IMR-90 (cell line): ENCODE measurements at regions of chr12 and their contacts with region 1.

Region 1: DNA sequence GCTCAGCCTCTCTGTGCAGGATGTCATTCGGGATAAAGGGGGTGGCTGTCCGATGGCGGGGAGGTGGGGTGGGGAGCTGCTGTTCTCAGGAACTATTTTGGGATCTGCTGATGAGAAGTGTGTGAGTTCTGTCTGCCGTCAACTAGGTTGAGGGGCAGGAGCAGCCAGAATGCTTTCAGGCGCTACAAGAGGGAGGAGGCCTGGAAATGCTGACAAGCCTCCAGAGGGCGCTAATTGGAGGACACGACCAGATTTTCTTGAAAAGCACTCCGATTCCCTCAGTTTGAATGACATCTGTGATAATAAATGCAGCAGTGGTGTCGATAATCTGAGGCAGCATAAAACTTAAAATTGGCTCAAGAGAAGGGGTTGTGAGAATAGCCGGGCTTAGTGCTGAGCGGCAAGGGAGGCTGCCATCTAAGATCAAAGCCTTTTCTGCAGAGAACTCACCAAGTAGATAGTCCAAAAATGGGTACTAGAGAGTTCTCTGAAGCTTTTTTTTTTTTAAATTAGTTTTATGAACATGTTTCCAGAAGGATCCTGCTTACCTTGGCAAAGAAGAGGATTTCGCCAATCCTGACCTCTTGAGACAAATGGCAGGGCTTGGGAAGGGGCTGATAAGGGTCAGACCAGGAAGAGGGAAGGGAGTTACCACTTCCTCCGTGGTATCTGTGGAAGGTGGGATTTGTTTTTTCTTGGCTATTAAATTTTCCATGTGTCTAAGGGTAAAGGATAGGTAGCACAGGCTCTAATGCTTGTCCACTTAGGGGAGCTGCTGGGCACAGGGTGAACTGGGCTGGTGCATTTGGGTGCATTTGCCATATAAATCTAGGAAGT is 94.4 kb downstream of the CRACR2A start:
- DNase-seq: peak; percentile 29
- ATAC-seq: peak; percentile 35; the same call in 1 of the 2 replicates
- H3K4me3 ChIP-seq: no peak overlapping the region
- H3K27ac ChIP-seq: no peak overlapping the region
- H3K4me1 ChIP-seq: no peaks in the 10 kb centered on the region
- H3K27me3 ChIP-seq: peaks cover 28% of the 10 kb centered on the region
- CTCF ChIP-seq: peak; percentile 53
- POLR2A ChIP-seq: no peak
- RAD21 ChIP-seq: peak; percentile 53

Region 2: DNA sequence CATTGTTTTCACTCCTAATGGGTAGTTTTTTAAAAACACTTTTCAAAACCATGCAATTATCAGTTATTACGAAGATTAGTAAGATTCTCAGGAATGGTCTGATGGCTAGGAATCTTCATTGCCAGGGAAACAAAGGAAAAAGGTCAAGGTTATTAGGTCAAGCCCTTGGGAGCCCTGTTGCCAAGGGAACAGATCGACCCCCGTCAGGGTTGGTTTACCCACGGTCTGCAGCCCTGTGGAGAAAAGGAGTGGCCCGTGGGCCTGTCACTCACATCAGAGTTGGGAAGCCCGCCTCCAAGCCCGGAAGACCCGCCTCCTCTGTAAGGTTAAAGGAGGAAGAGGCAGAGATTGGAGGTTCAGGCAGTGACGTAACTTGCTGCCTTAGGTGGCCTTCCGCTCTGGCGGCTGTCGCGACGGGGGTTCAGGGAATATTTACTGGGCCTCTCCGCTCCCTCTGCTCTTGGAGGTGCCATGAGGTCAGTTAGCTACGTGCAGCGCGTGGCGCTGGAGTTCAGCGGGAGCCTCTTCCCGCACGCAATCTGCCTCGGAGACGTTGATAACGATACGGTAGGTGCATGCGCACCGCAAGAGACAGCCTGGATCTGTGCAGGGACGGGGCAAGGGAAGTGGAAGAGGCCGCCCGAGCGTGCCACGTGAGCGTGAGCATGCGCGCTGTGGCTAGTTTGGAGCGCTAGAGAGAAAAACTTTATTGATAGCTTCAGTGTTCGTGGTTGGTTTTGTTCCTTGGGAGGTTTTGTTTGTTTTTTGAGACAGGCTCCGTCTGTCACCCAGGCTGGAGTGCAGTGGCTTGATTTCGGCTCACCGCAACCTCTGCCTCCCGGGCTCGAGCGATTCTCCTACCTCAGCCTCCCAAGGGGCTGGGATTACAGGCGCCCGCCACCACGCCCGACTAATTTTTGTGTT is 846.0 kb before region 1 on chr12 and contains the start of gene ITFG2:
- CTCF ChIA-PET with region 1: no interaction called
- POLR2A ChIA-PET with region 1: no interaction called
- dilution Hi-C with region 1: no loop called
- in situ Hi-C with region 1: no loop called
- intact Hi-C with region 1: no loop called
- DNase-seq: peak; percentile 98
- ATAC-seq: peak; percentile 98
- H3K4me3 ChIP-seq: peak within 1 kb of the TSS; percentile 61
- H3K27ac ChIP-seq: peak within 1 kb of the TSS; percentile 92
- H3K4me1 ChIP-seq: no peaks in the 10 kb centered on the region
- H3K27me3 ChIP-seq: no peaks in the 10 kb centered on the region
- CTCF ChIP-seq: no peak
- POLR2A ChIP-seq: peak; percentile 84
- RAD21 ChIP-seq: no peak
- total RNA-seq, gene ITFG2: 20.0 and 20.3 TPM in 2 replicates

Region 3: DNA sequence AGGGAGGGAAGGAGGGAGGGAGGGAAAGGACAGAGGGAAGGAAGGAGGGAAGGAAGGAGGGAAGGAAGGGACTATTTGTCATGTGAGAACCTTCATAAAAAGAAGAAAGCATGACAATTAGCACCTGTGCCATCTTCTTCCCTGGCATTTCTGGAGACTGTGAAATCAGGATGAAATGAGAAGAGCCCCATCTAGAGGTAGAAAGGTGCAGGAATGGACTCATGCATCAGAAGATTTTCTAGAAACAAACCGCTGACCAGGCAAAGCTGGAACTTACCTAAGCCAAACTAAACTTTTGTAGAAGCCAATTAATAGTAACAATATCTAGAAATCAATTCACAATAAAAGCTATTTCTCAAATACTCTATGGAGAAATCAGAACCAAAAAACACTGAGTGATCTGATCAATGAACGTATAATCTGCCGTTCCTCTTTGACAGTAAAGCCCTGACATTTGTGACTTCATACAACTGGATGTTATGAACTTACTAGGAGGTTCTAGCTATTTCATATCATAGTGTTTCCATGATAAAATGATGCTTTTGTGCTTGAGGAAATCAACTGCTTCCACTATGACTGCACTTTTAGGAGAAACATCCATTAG is 118.8 kb after region 1 on chr12:
- CTCF ChIA-PET with region 1: interaction called, 3 read pairs
- POLR2A ChIA-PET with region 1: no interaction called
- dilution Hi-C with region 1: no loop called
- in situ Hi-C with region 1: loop called (anchors 10 kb)
- intact Hi-C with region 1: loop called (anchors 1 kb)
- DNase-seq: peak; percentile 43
- ATAC-seq: peak; percentile 80
- H3K4me3 ChIP-seq: no peak overlapping the region
- H3K27ac ChIP-seq: no peak overlapping the region
- H3K4me1 ChIP-seq: no peaks in the 10 kb centered on the region
- H3K27me3 ChIP-seq: peaks cover 9% of the 10 kb centered on the region
- CTCF ChIP-seq: peak; percentile 74
- POLR2A ChIP-seq: 0 out of 2 replicates have a peak, but pooled peaks have one; percentile 31
- RAD21 ChIP-seq: peak; percentile 79

Region 4: DNA sequence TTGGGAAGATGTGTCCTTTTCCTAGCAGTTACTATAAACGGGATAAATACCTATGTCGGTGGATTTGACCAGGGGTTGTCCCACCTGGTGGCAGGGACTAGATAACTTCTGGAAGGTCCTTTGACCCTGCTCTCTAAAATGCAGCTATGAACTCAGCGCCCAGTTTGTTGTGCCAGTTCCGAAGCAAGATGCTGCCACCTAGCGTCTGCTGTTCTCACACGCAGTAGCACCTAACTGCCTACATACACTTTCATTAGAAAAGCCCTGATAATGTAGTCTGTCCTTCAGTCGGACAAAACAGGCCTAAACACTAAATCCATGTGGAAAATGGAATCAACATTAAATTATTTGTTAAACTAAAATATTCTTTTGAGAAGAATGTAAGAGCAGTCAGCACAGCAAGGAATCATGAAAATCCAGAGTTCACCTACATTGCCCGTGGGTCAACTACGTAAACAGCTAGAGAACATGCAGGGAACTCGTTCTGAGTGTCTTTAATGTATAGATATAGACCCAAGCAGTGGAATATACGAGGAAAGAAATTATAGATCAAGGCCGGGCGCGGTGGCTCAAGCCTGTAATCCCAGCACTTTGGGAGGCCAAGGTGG is 145.4 kb after region 1 on chr12:
- CTCF ChIA-PET with region 1: no interaction called
- POLR2A ChIA-PET with region 1: no interaction called
- dilution Hi-C with region 1: no loop called
- in situ Hi-C with region 1: no loop called
- intact Hi-C with region 1: loop called (anchors 1 kb)
- DNase-seq: peak; percentile 72
- ATAC-seq: peak; percentile 93
- H3K4me3 ChIP-seq: no peak overlapping the region
- H3K27ac ChIP-seq: no peak overlapping the region
- H3K4me1 ChIP-seq: no peaks in the 10 kb centered on the region
- H3K27me3 ChIP-seq: no peaks in the 10 kb centered on the region
- CTCF ChIP-seq: peak; percentile 81
- POLR2A ChIP-seq: no peak
- RAD21 ChIP-seq: peak; percentile 81

Region 5: GRCh38 chr12:4276524-4277204 is 618.1 kb after region 1 on chr12:
- CTCF ChIA-PET with region 1: no interaction called
- POLR2A ChIA-PET with region 1: no interaction called
- dilution Hi-C with region 1: no loop called
- in situ Hi-C with region 1: no loop called
- intact Hi-C with region 1: loop called (anchors 5 kb)
- DNase-seq: peak; percentile 82
- ATAC-seq: peak; percentile 77
- H3K4me3 ChIP-seq: no peak overlapping the region
- H3K27ac ChIP-seq: no peak overlapping the region
- H3K4me1 ChIP-seq: peaks cover 3% of the 10 kb centered on the region; the same call in 1 of the 2 replicates
- H3K27me3 ChIP-seq: peaks cover 47% of the 10 kb centered on the region
- CTCF ChIP-seq: peak; percentile 97
- POLR2A ChIP-seq: no peak
- RAD21 ChIP-seq: peak; percentile 95